Activated CD4-positive, alpha-beta T cell treated with anti-CD3 and anti-CD28 coated beads for 36 hours (primary cell): ENCODE measurements at regions of chr11 and their contacts with region 1.

Region 1: DNA sequence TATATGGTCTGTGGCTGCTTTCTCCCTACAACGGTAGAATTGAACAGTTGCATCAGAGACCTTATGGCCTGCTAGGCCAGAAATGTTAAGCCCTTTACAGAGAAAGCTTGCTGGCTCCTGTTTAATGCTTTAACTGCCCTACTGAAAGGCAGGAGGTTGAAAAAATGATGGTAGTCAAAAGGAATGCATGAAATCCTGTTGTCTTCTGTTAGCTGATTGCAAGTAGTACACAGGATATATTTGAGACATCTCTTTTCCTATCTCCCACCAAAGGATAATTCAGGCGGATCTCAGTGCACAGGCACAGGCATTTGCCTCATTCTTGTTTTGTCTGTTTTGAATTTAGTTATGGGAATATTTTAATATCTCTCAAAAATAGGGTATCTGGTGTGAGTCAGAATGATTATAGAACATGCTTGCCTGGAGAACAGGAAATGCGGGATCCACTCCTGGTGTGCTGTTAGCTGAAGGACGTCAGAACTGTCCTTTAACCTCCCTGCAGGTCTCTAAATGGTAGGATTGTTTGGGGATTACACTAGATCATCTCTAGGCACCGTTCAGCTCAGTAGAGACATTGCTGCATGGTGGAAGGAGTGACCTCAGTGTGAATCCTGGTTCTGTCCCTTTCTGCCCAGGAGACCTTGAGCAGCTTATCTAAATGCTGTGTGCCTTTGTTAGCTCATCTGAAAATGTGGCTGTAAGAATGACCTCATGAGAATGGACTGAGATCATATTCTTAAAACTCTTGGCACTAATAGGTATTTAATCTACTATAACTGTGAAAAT is 49.5 kb downstream of the PACS1 start:
- DNase-seq: no peak
- ATAC-seq: no peak
- H3K4me3 Mint-ChIP-seq: no peak overlapping the region
- H3K27ac Mint-ChIP-seq: peak overlapping the region; percentile 74
- H3K4me1 Mint-ChIP-seq: peaks cover 87% of the 10 kb centered on the region
- H3K27me3 Mint-ChIP-seq: no peaks in the 10 kb centered on the region

Region 2: DNA sequence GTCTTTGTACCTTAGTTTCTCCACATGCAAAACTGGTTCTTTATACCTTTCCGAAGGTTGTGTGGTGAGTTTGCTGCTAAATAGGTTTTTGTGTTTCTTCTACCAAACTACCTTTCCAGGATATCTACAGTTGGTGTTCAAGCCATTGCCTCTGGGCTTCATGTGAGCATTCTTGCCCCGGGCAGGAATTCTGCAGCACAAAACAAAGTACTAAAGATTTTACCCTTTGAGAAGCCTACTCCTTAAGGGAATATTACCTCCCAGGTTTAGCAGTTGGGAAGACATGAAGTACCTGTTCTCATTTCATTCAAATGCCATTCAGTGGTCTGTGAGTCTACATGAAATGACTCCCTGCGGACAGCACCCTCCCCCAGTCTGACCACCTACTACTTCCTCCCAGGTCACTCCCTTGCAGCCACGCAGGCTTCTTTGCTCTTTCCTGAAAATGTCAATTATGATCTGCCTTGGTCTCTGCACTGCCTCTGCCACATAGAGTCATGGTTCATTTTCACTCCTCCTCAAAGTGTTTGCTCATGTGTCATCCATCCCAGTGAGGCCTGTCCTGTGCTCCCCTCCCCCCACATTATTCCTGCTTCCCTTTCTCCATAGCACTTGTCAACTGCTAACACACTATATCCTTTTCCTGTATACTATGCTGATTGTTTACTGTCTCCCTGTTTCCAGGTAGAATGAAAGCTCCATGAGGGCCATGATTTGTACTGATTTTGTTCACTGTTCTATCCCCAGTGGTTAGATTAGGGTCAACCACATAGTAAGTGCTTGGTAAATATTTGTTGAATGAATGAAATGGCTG is 12.5 kb before region 1 on chr11:
- CTCF ChIA-PET with region 1: interaction called, 12 read pairs
- POLR2A ChIA-PET with region 1: interaction called, 4 read pairs
- intact Hi-C with region 1: no loop called
- DNase-seq: peak; percentile 60
- ATAC-seq: peak; percentile 44
- H3K4me3 Mint-ChIP-seq: peak overlapping the region; percentile 0
- H3K27ac Mint-ChIP-seq: peak overlapping the region; percentile 58
- H3K4me1 Mint-ChIP-seq: peaks cover 90% of the 10 kb centered on the region
- H3K27me3 Mint-ChIP-seq: no peaks in the 10 kb centered on the region